ENCODE measurements at regions of chr21 and their contacts with region 1.

Region 1: DNA sequence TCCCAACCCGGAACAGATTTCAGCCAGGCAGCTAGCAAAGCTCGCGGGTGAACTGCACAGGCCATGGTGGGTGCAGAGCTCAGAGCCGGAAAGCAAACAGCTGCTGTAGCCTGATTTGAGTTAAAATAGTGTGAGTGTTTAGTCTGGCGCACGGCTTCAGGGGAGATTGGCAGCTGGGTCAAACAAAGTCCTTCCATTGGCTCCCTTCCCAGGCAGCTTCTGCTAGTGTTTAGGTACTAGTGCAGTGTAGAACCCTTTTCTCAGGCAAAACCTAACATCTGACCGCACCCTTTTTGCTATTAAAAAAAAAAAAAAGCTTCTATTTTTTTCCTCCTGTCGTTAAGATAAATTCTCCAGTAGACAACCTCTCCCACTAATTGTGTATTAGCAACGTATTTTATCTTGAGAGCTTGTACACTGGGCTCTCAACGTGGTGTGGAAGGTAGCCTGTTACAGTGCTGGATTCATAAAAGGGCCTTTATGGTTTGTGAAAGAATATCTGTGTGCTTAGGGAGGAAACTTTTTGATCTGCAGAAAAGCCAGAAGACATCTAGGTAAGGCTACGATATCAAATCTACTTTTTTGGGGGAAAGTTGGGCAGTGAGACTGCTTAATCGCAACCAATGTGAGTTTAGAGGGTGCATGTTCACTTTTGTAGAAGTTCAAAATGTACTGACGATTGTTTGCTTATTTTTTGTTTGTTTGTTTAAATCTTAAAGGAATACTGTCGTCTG is 689.6 kb downstream of the USP25 start:
- DNase-seq: peak; percentile 85 to 90 (median 89)
- ATAC-seq: peak; percentile 98
- H3K4me3 ChIP-seq: peak overlapping the region; percentile 99
- H3K27ac ChIP-seq: peak overlapping the region; percentile 80
- H3K4me1 ChIP-seq: peaks cover 2% of the 10 kb centered on the region
- H3K27me3 ChIP-seq: no peaks in the 10 kb centered on the region

Region 2: GRCh38 chr21:16357994-16358393 is 61.4 kb before region 1 on chr21:
- intact Hi-C with region 1: loop called in 1 of 4 experiments (anchors 10 kb)
- DNase-seq: no peak
- ATAC-seq: no peak
- H3K4me3 ChIP-seq: no peak overlapping the region
- H3K27ac ChIP-seq: no peak overlapping the region
- H3K4me1 ChIP-seq: no peaks in the 10 kb centered on the region
- H3K27me3 ChIP-seq: no peaks in the 10 kb centered on the region

Region 3: DNA sequence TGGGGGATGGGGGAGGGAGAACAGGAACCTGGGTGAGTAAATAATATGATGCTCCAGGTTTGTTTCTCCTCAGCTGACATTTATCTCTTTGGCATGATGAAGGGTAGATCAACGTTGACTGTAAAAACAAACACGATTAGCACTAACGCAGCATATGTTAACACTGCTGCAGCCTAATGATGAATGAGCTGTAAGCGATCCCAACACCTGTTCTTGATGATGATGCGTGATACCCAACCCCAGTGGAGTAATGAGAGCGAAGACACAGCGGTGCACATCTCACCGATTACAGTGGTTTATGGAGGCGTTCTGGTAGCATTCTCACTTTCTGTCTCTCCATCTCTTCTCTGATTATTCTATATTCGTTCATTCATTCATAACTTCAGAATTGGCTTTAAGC is 49.2 kb before region 1 on chr21:
- intact Hi-C with region 1: no loop called
- DNase-seq: no peak
- ATAC-seq: no peak
- H3K4me3 ChIP-seq: no peak overlapping the region
- H3K27ac ChIP-seq: no peak overlapping the region
- H3K4me1 ChIP-seq: no peaks in the 10 kb centered on the region
- H3K27me3 ChIP-seq: no peaks in the 10 kb centered on the region

Region 4: GRCh38 chr21:16473988-16474387 is 54.6 kb after region 1 on chr21:
- intact Hi-C with region 1: no loop called
- DNase-seq: peak in 1 of 3 donors; percentile 60
- ATAC-seq: peak; percentile 87 to 90
- H3K4me3 ChIP-seq: no peak overlapping the region
- H3K27ac ChIP-seq: peak overlapping the region; percentile 83
- H3K4me1 ChIP-seq: peaks cover 5% of the 10 kb centered on the region
- H3K27me3 ChIP-seq: no peaks in the 10 kb centered on the region

Region 5: GRCh38 chr21:16534408-16535101 is 115.2 kb after region 1 on chr21:
- intact Hi-C with region 1: loop called in 3 of 4 experiments (anchors 2 to 10 kb)
- DNase-seq: peak; percentile 81 to 93 (median 91)
- ATAC-seq: peak; percentile 86 to 91
- H3K4me3 ChIP-seq: peak overlapping the region; percentile 77
- H3K27ac ChIP-seq: peak overlapping the region; percentile 98
- H3K4me1 ChIP-seq: peaks cover 5% of the 10 kb centered on the region
- H3K27me3 ChIP-seq: no peaks in the 10 kb centered on the region